GM12878 (cell line): ENCODE measurements at regions of chr1 and their contacts with region 1.

Region 1: DNA sequence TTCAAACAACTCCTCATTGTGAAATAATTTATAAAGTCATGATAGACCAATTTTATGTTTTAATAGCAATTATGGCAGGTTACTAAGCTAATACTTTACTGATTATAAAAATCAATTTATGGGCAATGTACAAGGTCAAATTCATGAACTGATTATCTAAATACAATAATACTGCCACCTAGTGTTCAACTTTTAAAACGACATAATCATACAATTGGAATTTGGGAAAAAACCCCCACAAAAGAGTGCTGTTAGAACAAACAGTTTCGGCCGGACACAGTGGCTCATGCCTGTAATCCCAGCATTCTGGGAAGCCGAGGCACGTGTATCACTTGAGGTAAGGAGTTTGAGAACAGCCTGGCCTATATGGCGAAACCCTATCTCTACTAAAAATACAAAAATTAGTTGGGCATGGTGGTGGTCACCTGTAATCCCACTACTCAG is 14.0 kb downstream of the GTF2B start:
- DNase-seq: no peak
- ATAC-seq: peak; percentile 56
- H3K4me3 ChIP-seq: no peak overlapping the region
- H3K27ac ChIP-seq: no peak overlapping the region
- H3K4me1 ChIP-seq: no peaks in the 10 kb centered on the region
- H3K27me3 ChIP-seq: no peaks in the 10 kb centered on the region
- CTCF ChIP-seq: peak; percentile 22 to 55 (median 24); a peak in 4 of 6 replicates
- EP300 ChIP-seq: no peak
- POLR2A ChIP-seq: no peak
- RAD21 ChIP-seq: peak; percentile 51; the same call in 1 of the 2 replicates

Region 2: GRCh38 chr1:88608139-88608943 is 269.1 kb before region 1 on chr1:
- CTCF ChIA-PET with region 1: interaction called, 7 read pairs
- POLR2A ChIA-PET with region 1: no interaction called
- RAD21 ChIA-PET with region 1: interaction called, 5 read pairs
- SMC1A ChIA-PET with region 1: interaction called, 6 read pairs
- in situ Hi-C with region 1: no loop called
- intact Hi-C with region 1: loop called (anchors 1 kb)
- DNase-seq: no peak
- ATAC-seq: peak; percentile 84
- H3K4me3 ChIP-seq: no peak overlapping the region
- H3K27ac ChIP-seq: no peak overlapping the region
- H3K4me1 ChIP-seq: no peaks in the 10 kb centered on the region
- H3K27me3 ChIP-seq: no peaks in the 10 kb centered on the region; a peak in 1 of 4 replicates
- CTCF ChIP-seq: peak; percentile 51 to 60 (median 59); a peak in 5 of 6 replicates
- EP300 ChIP-seq: no peak
- POLR2A ChIP-seq: no peak
- RAD21 ChIP-seq: peak; percentile 52

Region 3: GRCh38 chr1:88683541-88684481 is 193.6 kb before region 1 on chr1 and contains the start of gene PKN2:
- CTCF ChIA-PET with region 1: interaction called, 10 read pairs
- POLR2A ChIA-PET with region 1: interaction called, 3 read pairs
- RAD21 ChIA-PET with region 1: interaction called, 8 read pairs
- SMC1A ChIA-PET with region 1: interaction called, 6 read pairs
- in situ Hi-C with region 1: no loop called
- intact Hi-C with region 1: no loop called
- DNase-seq: peak; percentile 92
- ATAC-seq: peak; percentile 91
- H3K4me3 ChIP-seq: peak within 1 kb of the TSS; percentile 95
- H3K27ac ChIP-seq: peak within 1 kb of the TSS; percentile 93
- H3K4me1 ChIP-seq: no peaks in the 10 kb centered on the region
- H3K27me3 ChIP-seq: no peaks in the 10 kb centered on the region
- CTCF ChIP-seq: peak; percentile 10 to 35 (median 23); a peak in 3 of 6 replicates
- EP300 ChIP-seq: peak; percentile 30 to 62; a peak in 2 of 4 replicates
- POLR2A ChIP-seq: peak; percentile 95
- RAD21 ChIP-seq: no peak
- polyA plus RNA-seq, gene PKN2: 2.6 to 3.8 TPM

Region 4: GRCh38 chr1:88800382-88801051 is 76.9 kb before region 1 on chr1:
- CTCF ChIA-PET with region 1: interaction called, 12 read pairs
- POLR2A ChIA-PET with region 1: no interaction called
- RAD21 ChIA-PET with region 1: no interaction called
- SMC1A ChIA-PET with region 1: interaction called, 8 read pairs
- in situ Hi-C with region 1: no loop called
- intact Hi-C with region 1: no loop called
- DNase-seq: no peak
- ATAC-seq: peak; percentile 34; the same call in 1 of the 3 replicates
- H3K4me3 ChIP-seq: no peak overlapping the region
- H3K27ac ChIP-seq: no peak overlapping the region
- H3K4me1 ChIP-seq: no peaks in the 10 kb centered on the region
- H3K27me3 ChIP-seq: no peaks in the 10 kb centered on the region
- CTCF ChIP-seq: peak in 2 of 3 experiments; percentile 27 to 40; a peak in 3 of 6 replicates
- EP300 ChIP-seq: no peak
- POLR2A ChIP-seq: no peak
- RAD21 ChIP-seq: no peak

Region 5: GRCh38 chr1:88891318-88891950 is 14.0 kb after region 1 on chr1 and contains the start of gene GTF2B:
- CTCF ChIA-PET with region 1: interaction called, 65 read pairs
- POLR2A ChIA-PET with region 1: interaction called, 3 read pairs
- RAD21 ChIA-PET with region 1: interaction called, 14 read pairs
- SMC1A ChIA-PET with region 1: interaction called, 11 read pairs
- in situ Hi-C with region 1: no loop called
- intact Hi-C with region 1: no loop called
- DNase-seq: peak; percentile 96
- ATAC-seq: peak; percentile 92
- H3K4me3 ChIP-seq: peak within 1 kb of the TSS; percentile 97
- H3K27ac ChIP-seq: peak within 1 kb of the TSS; percentile 91
- H3K4me1 ChIP-seq: peaks cover 2% of the 10 kb centered on the region; the same call in 1 of the 2 replicates
- H3K27me3 ChIP-seq: no peaks in the 10 kb centered on the region
- CTCF ChIP-seq: no peak
- EP300 ChIP-seq: peak in 1 of 2 experiments; percentile 61; a peak in 2 of 4 replicates
- POLR2A ChIP-seq: peak; percentile 100
- RAD21 ChIP-seq: no peak
- polyA plus RNA-seq, gene GTF2B: 71.0 to 79.7 TPM